ENCODE measurements at regions of chr5 and their contacts with region 1.

Region 1: GRCh38 chr5:150656191-150657132 is 4.6 kb upstream of the MYOZ3 start:
- DNase-seq: peak; percentile 79 to 92 (median 87)
- H3K4me3 ChIP-seq: peak overlapping the region; percentile 45
- H3K27ac ChIP-seq: peak overlapping the region; percentile 35 to 39
- H3K4me1 ChIP-seq: peaks cover 21% of the 10 kb centered on the region
- H3K27me3 ChIP-seq: no peaks in the 10 kb centered on the region
- CTCF ChIP-seq: peak; percentile 39 to 77 (median 72)
- EP300 ChIP-seq: no peak
- POLR2A ChIP-seq: no peak

Region 2: GRCh38 chr5:150560401-150561193 is 95.9 kb before region 1 on chr5:
- intact Hi-C with region 1: loop called in 3 of 4 experiments (anchors 2 to 5 kb)
- DNase-seq: peak; percentile 64 to 95 (median 83)
- H3K4me3 ChIP-seq: no peak overlapping the region
- H3K27ac ChIP-seq: no peak overlapping the region
- H3K4me1 ChIP-seq: no peaks in the 10 kb centered on the region
- H3K27me3 ChIP-seq: no peaks in the 10 kb centered on the region
- CTCF ChIP-seq: peak; percentile 86 to 94 (median 90)
- EP300 ChIP-seq: no peak
- POLR2A ChIP-seq: no peak

Region 3: GRCh38 chr5:150582241-150583109 is 74.0 kb before region 1 on chr5:
- intact Hi-C with region 1: loop called in 2 of 4 experiments (anchors 5 kb)
- DNase-seq: peak; percentile 70 to 92 (median 87)
- H3K4me3 ChIP-seq: no peak overlapping the region
- H3K27ac ChIP-seq: peak overlapping the region; percentile 1 to 60
- H3K4me1 ChIP-seq: peaks cover 6% of the 10 kb centered on the region
- H3K27me3 ChIP-seq: no peaks in the 10 kb centered on the region
- CTCF ChIP-seq: no peak
- EP300 ChIP-seq: no peak
- POLR2A ChIP-seq: no peak

Region 4: GRCh38 chr5:150589871-150590601 is 66.4 kb before region 1 on chr5:
- intact Hi-C with region 1: loop called in 3 of 4 experiments (anchors 2 to 5 kb)
- DNase-seq: peak; percentile 89 to 92 (median 90)
- H3K4me3 ChIP-seq: no peak overlapping the region
- H3K27ac ChIP-seq: peak overlapping the region; percentile 62 to 81
- H3K4me1 ChIP-seq: peaks cover 23% of the 10 kb centered on the region
- H3K27me3 ChIP-seq: no peaks in the 10 kb centered on the region
- CTCF ChIP-seq: peak; percentile 64 to 95 (median 92)
- EP300 ChIP-seq: no peak
- POLR2A ChIP-seq: no peak

Region 5: DNA sequence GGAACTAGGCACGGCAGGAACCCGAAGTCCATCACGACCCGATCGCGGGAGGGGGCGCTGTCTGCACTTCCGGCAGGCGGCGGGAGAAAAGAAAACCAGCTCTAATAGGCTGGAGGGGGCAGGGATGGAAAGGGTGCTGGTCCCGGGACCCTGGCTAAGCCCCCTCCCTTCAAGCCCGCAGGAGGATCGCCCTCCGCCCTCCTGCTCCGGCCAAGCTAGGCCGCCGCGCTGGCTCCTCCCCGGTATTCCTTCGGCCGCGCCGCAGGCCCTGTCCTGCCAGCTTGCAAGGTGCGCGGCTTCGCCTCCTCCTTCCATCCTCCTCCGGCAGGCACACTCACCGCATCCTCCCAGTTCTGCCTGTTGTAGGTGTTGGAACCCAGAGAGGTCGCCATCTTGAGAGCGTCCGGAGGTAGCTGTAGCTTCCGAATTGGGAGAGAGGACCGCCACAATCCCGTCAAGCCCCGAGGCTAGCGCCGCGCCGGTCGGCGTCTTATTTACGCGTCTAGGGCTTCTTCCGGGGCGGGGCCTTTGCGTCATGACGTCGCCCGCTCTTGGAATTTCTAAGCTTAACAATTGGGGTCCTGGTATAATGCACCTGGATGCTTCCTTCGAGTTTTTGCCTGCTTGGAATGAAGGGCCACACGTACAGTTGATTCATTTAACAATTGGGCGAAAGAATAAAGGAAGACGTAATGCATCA is 44.3 kb after region 1 on chr5 and contains the start of gene RBM22:
- intact Hi-C with region 1: loop called in 1 of 4 experiments (anchors 10 kb)
- DNase-seq: peak; percentile 90 to 95 (median 92)
- H3K4me3 ChIP-seq: peak within 1 kb of the TSS; percentile 94
- H3K27ac ChIP-seq: peak within 1 kb of the TSS; percentile 80 to 89
- H3K4me1 ChIP-seq: peaks cover 5% of the 10 kb centered on the region
- H3K27me3 ChIP-seq: no peaks in the 10 kb centered on the region
- CTCF ChIP-seq: peak; percentile 39 to 74 (median 61)
- EP300 ChIP-seq: peak; percentile 48
- POLR2A ChIP-seq: peak; percentile 68
- total RNA-seq, gene RBM22: 35.5 to 59.0 (median 48.6) TPM

Measured in ovary (tissue), 10 donors.